Heart right ventricle (tissue), 16 donors: ENCODE measurements at regions of chr10 and their contacts with region 1.

Region 1: GRCh38 chr10:61211468-61211867 is 241.7 kb downstream of the TMEM26 start:
- DNase-seq: no peak
- ATAC-seq: no peak
- H3K4me3 ChIP-seq: no peak overlapping the region
- H3K27ac ChIP-seq: no peak overlapping the region
- H3K4me1 ChIP-seq: no peaks in the 10 kb centered on the region
- H3K27me3 ChIP-seq: no peaks in the 10 kb centered on the region
- CTCF ChIP-seq: no peak

Region 2: GRCh38 chr10:60992636-60993035 is 218.8 kb before region 1 on chr10:
- intact Hi-C with region 1: loop called in 1 of 10 experiments (anchors 5 kb)
- DNase-seq: no peak
- ATAC-seq: no peak
- H3K4me3 ChIP-seq: no peak overlapping the region
- H3K27ac ChIP-seq: no peak overlapping the region
- H3K4me1 ChIP-seq: no peaks in the 10 kb centered on the region
- H3K27me3 ChIP-seq: no peaks in the 10 kb centered on the region
- CTCF ChIP-seq: no peak